HCT116 (cell line): ENCODE measurements at regions of chr14 and their contacts with region 1.

Region 1: DNA sequence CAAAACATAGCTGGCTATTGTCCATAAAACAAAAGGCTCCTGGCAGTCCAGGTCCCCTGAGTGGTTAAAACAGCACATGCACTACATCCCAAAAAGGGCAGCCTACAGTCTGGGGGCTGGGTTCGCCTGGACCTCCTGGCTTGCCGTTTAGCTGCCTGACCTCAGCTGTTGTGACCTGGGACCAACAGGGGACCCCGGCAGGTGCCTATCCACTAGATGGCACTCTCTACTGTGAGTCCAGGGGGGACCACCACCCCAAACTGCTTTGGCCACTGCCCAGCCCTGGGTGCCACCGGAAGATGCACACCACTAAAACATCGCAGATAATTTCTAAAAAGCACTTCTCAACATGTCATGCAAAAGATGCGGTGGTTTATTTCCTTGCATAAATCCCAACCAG is 2.9 kb upstream of the RTL1 start:
- DNase-seq: no peak
- ATAC-seq: no peak
- H3K4me3 ChIP-seq: no peak overlapping the region
- H3K27ac ChIP-seq: no peak overlapping the region
- H3K4me1 ChIP-seq: no peaks in the 10 kb centered on the region
- H3K27me3 ChIP-seq: 0 out of 2 replicates have a peak, but pooled peaks cover 6% of the 10 kb centered on the region
- CTCF ChIP-seq: peak; percentile 56 to 69 (median 57); a peak in 5 of 6 replicates
- POLR2A ChIP-seq: no peak
- RAD21 ChIP-seq: peak; percentile 88

Region 2: DNA sequence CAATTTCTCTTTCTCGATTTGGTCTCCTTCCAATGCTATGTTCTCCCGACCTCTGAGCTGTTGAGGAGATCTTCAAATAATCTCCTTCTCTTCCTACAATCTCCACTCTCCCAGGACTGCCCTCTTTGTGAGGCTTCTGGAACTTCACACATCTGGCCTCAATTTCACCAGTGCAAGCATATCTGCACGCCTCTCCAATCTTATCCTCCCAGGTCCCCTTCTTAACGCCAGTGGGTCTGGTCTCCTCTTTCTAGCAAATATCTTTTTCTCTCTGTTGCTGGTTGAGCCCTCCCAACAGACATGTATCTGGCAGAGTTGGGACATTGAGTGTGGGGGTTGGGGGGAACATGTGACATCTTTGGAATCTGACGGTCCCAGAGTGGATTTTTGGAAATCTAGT is 20.8 kb before region 1 on chr14:
- CTCF ChIA-PET with region 1: no interaction called
- POLR2A ChIA-PET with region 1: no interaction called
- RAD21 ChIA-PET with region 1: no interaction called
- intact Hi-C with region 1: no loop called
- DNase-seq: no peak
- ATAC-seq: no peak
- H3K4me3 ChIP-seq: no peak overlapping the region
- H3K27ac ChIP-seq: no peak overlapping the region
- H3K4me1 ChIP-seq: no peaks in the 10 kb centered on the region
- H3K27me3 ChIP-seq: no peaks in the 10 kb centered on the region
- CTCF ChIP-seq: no peak
- POLR2A ChIP-seq: no peak
- RAD21 ChIP-seq: no peak

Region 3: DNA sequence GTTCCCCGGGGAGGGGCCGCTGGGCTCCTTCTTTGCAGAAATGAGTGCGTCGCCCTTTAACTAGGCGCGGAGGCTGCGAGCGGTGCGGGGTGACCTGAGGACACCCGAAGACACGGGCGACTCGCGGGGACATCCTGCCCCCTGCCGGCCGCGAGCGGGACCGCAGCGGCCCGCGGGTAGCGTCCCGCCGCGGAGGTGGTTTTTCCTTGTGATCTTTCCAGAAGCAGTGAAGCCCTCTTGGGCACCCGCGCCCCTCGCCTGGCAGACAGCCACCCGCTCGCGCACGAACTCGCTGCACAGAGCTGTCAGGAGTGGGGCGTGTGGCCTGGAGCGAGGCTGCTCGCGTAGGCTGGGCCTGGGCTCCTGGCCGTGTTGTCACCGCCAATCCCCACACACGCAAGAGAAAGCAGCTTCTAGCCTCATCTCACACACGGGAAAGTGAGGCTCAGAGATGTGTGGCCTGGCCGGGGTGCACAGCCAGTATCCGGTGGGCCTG is 722.1 kb after region 1 on chr14:
- CTCF ChIA-PET with region 1: no interaction called
- POLR2A ChIA-PET with region 1: no interaction called
- RAD21 ChIA-PET with region 1: interaction called in 1 of 2 experiments, 4 read pairs
- intact Hi-C with region 1: loop called (anchors 2 kb)
- DNase-seq: peak; percentile 31
- ATAC-seq: peak; percentile 95
- H3K4me3 ChIP-seq: no peak overlapping the region
- H3K27ac ChIP-seq: peak overlapping the region; percentile 24; the same call in 1 of the 2 replicates
- H3K4me1 ChIP-seq: peaks cover 7 to 9% of the 10 kb centered on the region in 2 experiments; a peak in 3 of 4 replicates
- H3K27me3 ChIP-seq: no peaks in the 10 kb centered on the region
- CTCF ChIP-seq: peak; percentile 73 to 79 (median 79)
- POLR2A ChIP-seq: no peak
- RAD21 ChIP-seq: peak; percentile 97